WTC11 (cell line): ENCODE measurements at regions of chr10 and their contacts with region 1.

Region 1: DNA sequence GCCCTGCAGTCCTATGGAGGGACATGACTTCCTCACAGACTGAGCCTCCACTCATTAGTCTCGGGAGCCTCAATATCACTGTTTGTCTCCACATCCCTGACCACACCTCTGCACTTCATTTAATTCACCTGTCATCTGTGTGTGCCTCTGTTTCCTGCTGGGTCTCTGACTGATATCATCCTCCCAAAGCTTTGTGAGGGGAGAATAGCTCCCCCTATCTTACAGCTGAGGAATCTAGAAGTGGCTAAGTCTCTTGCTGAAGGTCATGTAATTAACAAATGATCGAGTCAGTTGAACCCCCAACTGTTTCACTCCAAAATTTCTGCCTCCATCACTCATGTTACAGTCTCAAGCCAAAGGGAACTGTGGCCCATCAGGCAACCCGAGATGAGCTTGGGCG is 5.5 kb upstream of the CPXM2 start:
- DNase-seq: no peak
- ATAC-seq: peak; percentile 71
- H3K4me3 Mint-ChIP-seq: no peak overlapping the region
- H3K27ac Mint-ChIP-seq: no peak overlapping the region
- H3K4me1 Mint-ChIP-seq: 0 out of 2 replicates have a peak, but pooled peaks cover 5% of the 10 kb centered on the region
- H3K27me3 Mint-ChIP-seq: peaks cover 17% of the 10 kb centered on the region
- CTCF ChIP-seq: no peak; the same call in 1 of the 2 replicates

Region 2: DNA sequence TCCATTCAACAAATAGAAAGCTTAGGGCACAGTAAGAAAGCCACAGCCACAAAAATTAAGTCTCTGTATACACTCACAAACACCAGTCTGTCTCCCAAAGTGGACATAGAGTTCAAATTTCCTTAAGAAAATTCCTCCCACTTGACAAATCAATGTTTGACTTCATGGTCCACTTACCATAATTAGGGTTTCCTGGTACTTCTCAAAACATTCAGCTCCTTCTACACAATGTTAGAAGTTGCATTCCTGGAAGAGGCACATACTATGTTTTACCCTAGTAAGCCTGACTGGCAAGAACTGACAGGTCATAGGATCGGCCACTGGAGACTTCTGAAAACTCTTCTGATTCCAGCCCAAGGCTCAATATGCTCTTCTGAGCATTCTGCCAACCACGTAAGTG is 76.0 kb before region 1 on chr10:
- CTCF ChIA-PET with region 1: no interaction called
- POLR2A ChIA-PET with region 1: no interaction called
- DNase-seq: no peak
- ATAC-seq: no peak
- H3K4me3 Mint-ChIP-seq: no peak overlapping the region
- H3K27ac Mint-ChIP-seq: no peak overlapping the region
- H3K4me1 Mint-ChIP-seq: no peaks in the 10 kb centered on the region
- H3K27me3 Mint-ChIP-seq: no peaks in the 10 kb centered on the region
- CTCF ChIP-seq: no peak

Region 3: DNA sequence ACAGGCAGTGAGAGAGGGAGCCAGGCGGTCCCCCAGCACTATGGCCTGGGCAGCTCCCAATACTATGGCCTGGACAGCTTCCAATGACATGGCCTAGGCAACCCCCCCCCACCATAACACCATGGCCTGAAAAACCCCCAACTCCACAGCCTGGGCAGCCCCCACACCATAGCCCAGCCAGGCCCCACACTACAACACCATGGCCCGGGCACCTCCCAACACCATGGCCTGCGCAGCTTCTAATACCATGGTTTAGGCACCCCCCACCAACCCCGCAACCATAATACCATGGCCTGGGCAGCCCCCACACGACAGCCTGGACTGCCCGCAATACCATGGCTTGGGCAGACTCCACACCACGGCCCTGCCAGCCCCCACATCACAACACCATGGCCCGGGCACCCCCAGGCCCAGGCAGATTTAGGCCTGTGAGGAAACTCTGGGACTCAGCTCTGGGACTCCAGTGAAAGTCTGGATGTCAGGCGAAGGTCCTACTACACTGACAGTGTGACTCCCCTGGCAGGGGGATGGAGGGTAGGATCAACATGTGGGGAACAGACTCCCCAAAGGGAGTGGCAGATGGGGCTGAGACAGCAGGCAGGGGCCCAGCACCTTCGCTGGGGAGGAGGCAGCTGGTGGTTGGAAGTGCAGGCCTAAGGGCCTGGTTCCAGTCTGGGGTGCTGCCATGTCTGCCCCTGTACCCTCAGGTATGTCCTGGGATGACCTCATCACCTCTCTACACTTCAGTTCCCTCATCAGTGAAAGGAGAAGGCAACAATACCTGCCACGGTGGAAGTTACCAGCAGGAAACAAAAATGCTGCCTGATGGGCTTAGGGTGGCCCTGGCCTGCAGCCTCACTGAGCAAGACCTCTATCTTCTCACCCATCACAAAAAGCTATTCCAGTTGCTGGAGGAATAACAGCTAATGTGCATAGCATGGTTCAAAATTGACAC is 14.2 kb before region 1 on chr10:
- CTCF ChIA-PET with region 1: interaction called, 15 read pairs
- POLR2A ChIA-PET with region 1: no interaction called
- DNase-seq: no peak
- ATAC-seq: no peak
- H3K4me3 Mint-ChIP-seq: no peak overlapping the region
- H3K27ac Mint-ChIP-seq: no peak overlapping the region
- H3K4me1 Mint-ChIP-seq: 0 out of 2 replicates have a peak, but pooled peaks cover 2% of the 10 kb centered on the region
- H3K27me3 Mint-ChIP-seq: no peaks in the 10 kb centered on the region
- CTCF ChIP-seq: no peak

Region 4: DNA sequence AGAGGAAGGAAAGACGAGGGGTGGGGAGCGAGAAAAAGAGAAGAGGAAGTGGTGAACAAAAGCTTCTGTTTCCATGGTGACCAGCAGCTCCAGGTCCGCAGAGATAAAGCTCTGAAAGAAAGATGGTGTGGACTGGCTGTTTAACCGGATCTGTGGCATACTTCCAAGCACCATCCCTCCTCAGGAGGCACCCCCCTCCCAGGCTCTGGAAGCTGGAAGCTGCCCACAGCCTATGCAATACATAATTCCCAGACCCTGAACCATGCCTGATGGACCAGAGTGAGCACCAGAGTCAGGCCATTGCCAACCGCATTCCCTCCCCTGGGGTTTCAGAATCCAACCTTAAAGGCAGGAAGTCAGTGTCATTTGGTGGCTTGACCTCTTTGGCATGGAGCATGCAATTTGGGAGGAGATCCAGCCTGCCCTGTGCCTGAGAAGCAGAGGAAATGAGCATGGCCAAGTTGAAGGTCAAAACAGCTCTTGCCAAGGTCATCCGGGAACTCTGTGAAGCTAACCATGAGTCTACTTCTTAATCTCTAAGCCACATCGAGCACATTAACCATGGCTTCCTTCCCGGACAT is 16.6 kb after region 1 on chr10:
- CTCF ChIA-PET with region 1: interaction called, 22 read pairs
- POLR2A ChIA-PET with region 1: no interaction called
- DNase-seq: no peak
- ATAC-seq: peak; percentile 47
- H3K4me3 Mint-ChIP-seq: no peak overlapping the region
- H3K27ac Mint-ChIP-seq: no peak overlapping the region
- H3K4me1 Mint-ChIP-seq: peaks cover 23% of the 10 kb centered on the region
- H3K27me3 Mint-ChIP-seq: peaks cover 8% of the 10 kb centered on the region
- CTCF ChIP-seq: no peak

Region 5: GRCh38 chr10:123986742-123987141 is 89.6 kb after region 1 on chr10:
- CTCF ChIA-PET with region 1: no interaction called
- POLR2A ChIA-PET with region 1: no interaction called
- DNase-seq: no peak
- ATAC-seq: no peak
- H3K4me3 Mint-ChIP-seq: no peak overlapping the region
- H3K27ac Mint-ChIP-seq: no peak overlapping the region
- H3K4me1 Mint-ChIP-seq: peaks cover 3% of the 10 kb centered on the region
- H3K27me3 Mint-ChIP-seq: peaks cover 48% of the 10 kb centered on the region
- CTCF ChIP-seq: no peak